ENCODE measurements at regions of chr22 and their contacts with region 1.

Region 1: DNA sequence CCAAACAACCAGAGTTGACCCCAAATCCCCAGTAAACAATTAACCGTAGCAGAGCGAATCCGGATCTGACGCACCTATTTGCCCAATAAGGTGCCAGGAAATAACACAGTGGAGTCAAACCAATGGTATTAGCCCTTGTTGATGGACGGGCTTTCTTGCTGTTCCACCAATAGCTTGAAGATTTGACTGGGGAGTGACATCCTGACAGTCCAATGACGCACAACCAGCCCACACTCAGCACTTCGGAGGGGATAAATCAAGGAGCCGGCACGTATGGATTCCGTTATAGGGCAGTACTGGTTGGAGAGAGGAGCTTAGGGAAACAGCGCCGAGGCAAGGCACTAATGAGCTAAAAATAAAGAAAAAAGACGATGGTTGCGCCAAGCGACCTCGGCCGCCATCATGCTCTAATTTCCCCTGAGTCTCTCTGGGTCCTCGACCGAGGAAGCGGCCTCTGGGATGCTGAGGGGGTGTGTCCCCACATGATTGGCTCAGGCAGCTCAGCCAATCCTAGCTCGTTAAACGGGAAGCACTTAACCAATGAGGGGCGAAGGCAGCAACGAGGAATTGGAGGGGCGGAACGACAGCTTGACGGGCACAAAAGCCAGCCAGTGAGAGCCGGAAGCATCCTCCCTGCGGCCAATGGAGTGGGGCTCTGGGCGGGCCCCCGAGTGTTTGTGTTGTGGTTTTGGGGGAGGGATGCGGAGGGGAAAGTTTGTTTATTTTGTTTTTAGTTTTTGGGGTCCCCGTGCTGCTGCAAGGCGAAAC is 49.5 kb downstream of the FAM83F start:
- DNase-seq: peak; percentile 97 to 98
- H3K4me3 ChIP-seq: peak overlapping the region; percentile 93
- H3K4me1 ChIP-seq: peaks cover 20% of the 10 kb centered on the region
- H3K27me3 ChIP-seq: no peaks in the 10 kb centered on the region; the same call in none of the 2 replicates

Region 2: DNA sequence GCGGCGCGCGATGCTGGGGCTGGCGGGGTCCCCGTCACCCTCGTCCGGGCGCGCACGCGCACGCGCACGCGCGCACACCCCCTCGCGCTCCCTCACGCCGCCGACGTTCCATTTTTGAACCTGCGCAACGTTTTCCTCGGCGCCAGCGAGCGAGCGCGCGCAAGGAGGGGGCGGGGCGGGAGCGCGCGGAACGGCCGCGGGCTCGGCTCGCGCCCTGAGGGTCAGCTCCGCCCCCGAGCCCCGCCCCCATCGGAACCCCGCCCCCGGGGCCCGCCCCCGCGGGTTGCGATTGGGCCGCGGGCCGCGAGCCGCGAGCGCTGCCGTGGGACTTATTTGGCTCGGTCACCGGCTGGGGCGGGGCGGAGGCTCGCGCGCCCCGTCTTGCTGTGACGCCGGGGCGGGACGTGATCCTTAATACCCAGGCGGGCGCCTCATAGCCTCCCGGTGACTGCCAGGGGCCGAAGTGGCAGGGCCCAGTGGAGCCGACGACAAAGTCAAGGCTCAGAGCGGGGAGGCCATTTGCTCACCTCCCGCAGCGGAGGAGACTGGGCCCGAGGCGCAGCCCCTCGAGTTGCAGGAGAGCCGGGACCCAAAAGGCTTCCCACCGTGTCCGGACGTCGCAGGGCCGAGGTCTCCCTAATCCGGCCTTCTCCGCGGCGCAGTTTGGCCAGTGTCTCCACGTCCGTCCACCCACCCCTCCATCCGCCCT is 891.6 kb before region 1 on chr22 and contains the start of gene CBX7:
- in situ Hi-C with region 1: loop called (anchors 25 kb)
- DNase-seq: peak; percentile 72 to 91
- H3K4me3 ChIP-seq: peak within 1 kb of the TSS; percentile 48
- H3K4me1 ChIP-seq: peaks cover 8% of the 10 kb centered on the region; the same call in 1 of the 2 replicates
- H3K27me3 ChIP-seq: peaks cover 18% of the 10 kb centered on the region

Region 3: DNA sequence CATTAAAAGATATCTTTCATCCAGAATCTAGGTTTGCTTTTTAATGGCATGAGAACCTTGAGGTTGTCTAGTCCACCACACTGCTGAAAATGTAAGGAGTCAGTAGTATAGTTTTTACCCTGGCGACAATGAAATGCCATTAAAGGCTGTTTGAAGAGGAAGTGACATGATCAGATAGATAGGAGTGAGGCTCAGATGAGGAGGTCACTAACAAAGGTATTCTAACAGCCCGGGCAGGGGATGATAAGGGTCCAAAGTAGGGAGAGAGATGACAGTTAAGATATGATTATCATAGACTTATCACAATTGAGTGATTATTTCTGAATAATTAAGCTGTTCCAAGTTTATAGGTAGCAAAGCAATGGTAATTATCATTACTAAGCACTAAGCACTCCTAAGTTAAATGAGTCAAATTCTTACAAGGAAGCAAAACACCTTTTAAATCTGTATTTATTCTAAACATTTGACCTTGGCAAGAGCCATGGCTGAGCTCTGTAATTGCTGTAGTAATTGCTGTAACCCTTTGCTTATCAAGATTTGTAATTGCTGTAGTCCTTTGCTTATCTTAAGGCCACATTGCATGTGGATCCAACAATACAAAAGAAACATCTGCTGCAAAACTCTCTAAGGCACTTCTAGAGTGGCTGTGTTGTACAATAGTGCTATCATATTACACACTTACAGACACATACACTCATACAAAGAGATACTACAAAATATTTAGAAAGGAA is 243.3 kb before region 1 on chr22:
- in situ Hi-C with region 1: no loop called
- DNase-seq: peak in 1 of 2 experiments; percentile 58
- H3K4me3 ChIP-seq: no peak overlapping the region
- H3K4me1 ChIP-seq: peaks cover 10% of the 10 kb centered on the region
- H3K27me3 ChIP-seq: peaks cover 5% of the 10 kb centered on the region; the same call in 1 of the 2 replicates

Region 4: GRCh38 chr22:40121461-40121860 is 77.2 kb after region 1 on chr22:
- in situ Hi-C with region 1: no loop called
- DNase-seq: no peak
- H3K4me3 ChIP-seq: no peak overlapping the region
- H3K4me1 ChIP-seq: no peaks in the 10 kb centered on the region
- H3K27me3 ChIP-seq: no peaks in the 10 kb centered on the region

Region 5: GRCh38 chr22:40183029-40183581 is 138.8 kb after region 1 on chr22:
- in situ Hi-C with region 1: loop called (anchors 10 kb)
- DNase-seq: peak; percentile 81 to 96
- H3K4me3 ChIP-seq: 0 out of 2 replicates have a peak overlapping the region, but pooled peaks have one; percentile 3
- H3K4me1 ChIP-seq: peaks cover 37% of the 10 kb centered on the region
- H3K27me3 ChIP-seq: no peaks in the 10 kb centered on the region

Region 6: GRCh38 chr22:40238425-40239344 is 194.4 kb after region 1 on chr22:
- in situ Hi-C with region 1: no loop called
- DNase-seq: no peak
- H3K4me3 ChIP-seq: no peak overlapping the region
- H3K4me1 ChIP-seq: peaks cover 7% of the 10 kb centered on the region
- H3K27me3 ChIP-seq: no peaks in the 10 kb centered on the region

Region 7: DNA sequence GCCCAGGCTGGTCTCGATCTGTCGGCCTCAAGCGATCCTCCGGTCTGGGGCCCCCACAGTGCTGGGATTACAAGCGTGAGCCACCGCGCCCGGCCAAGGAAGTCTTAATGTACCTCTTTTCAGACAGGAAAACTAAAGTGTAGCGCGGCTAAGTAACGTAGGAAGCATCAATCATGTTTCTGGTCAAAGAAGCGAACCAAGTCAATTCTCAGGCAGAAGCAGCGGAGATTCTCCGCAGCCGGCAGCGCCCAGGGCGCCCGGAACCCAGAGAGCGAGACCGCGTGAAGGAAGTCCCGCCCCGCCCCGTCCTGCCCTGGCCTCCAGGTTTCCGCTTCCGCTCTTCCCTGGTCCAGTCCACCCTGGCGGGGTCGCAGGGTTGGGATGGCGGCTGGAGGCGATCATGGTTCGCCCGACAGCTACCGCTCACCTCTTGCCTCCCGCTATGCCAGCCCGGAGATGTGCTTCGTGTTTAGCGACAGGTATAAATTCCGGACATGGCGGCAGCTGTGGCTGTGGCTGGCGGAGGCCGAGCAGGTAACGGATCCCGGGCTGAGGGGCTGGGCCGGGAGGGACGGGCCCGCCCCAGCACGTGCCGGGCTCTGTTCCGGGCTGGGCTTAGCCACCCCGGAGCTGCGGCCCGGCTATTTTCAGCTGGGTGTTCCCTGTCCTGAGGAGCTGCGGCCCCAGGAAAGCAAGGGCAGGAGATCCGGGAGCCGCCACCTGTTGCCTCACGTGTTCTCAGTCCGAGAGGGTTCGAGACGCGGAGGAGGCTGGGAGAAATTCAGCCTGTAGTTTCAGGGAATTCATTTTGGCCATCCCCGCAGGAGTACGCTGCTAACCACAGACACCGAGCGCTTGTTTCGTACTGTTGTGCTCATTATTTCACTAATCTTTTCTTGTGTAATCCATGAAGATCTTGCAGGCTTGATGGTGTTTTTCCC is 302.2 kb after region 1 on chr22 and contains the start of gene ADSL:
- in situ Hi-C with region 1: loop called (anchors 10 kb)
- DNase-seq: peak; percentile 87 to 94
- H3K4me3 ChIP-seq: peak within 1 kb of the TSS; percentile 93
- H3K4me1 ChIP-seq: peaks cover 4% of the 10 kb centered on the region; the same call in 1 of the 2 replicates
- H3K27me3 ChIP-seq: no peaks in the 10 kb centered on the region